ENCODE measurements at regions of chr18 and their contacts with region 1.

Region 1: GRCh38 chr18:3923750-3924149 is 473.8 kb downstream of the TGIF1 start:
- DNase-seq: no peak
- ATAC-seq: no peak

Region 2: DNA sequence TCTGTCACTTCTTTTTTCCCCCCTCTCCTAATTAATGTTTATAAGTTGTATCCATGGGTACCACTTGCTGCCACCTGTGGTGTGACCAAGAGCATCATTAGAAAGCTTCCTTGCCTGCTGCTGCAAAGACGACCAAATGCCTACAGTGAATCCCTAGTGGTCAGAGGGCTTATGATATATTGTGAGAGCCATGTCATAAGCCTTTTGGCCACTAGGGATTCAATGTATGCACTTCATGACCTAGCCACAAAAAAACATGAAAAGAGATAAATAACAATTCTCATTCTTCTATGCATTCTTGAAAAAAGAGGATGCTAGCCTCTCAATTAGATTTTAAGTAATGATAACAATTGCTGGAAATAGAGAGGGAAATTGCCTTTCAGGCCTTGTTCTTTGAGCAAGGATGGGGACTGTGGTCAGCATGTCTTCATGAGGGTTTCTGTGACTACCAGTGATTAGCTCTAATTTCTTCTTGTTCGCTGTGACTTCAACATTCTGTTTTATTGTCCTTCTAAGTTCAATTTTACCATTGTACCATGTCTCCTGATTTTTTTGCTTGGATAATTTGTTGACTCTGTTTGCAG is 38.4 kb before region 1 on chr18:
- intact Hi-C with region 1: loop called (anchors 5 kb)
- DNase-seq: no peak
- ATAC-seq: no peak

Region 3: GRCh38 chr18:3910512-3910911 is 13.2 kb before region 1 on chr18:
- intact Hi-C with region 1: no loop called
- DNase-seq: no peak
- ATAC-seq: no peak

Region 4: DNA sequence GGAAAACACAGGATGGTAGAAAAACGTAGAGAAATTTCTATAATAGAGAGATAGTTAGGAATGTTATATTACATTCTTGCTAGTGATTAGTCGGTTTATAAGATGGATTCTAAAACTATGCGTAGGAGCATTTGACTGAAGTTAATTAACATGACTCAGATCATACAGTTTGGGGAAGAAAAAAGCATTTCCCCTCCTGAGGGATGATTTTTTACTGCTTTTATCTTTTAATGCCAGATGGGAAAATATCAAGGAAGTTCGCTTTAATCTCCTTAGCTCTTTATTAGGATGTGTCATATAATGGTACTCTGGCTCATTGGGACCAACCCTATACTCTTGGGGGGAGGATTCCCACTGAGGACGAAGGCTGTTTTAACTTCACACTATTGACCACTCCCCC is 28.3 kb after region 1 on chr18:
- intact Hi-C with region 1: no loop called
- DNase-seq: no peak
- ATAC-seq: no peak

Region 5: GRCh38 chr18:4146797-4147196 is 223.0 kb after region 1 on chr18:
- intact Hi-C with region 1: no loop called
- DNase-seq: no peak
- ATAC-seq: no peak

Measured in Right ventricle myocardium inferior (tissue), 1 donor.